ENCODE measurements at regions of chrX and their contacts with region 1.

Region 1: GRCh38 chrX:153460845-153461244 is 9.5 kb downstream of the HAUS7 start:
- DNase-seq: peak; percentile 73
- ATAC-seq: peak; percentile 81
- H3K4me3 Mint-ChIP-seq: no peak overlapping the region
- H3K27ac Mint-ChIP-seq: no peak overlapping the region
- H3K4me1 Mint-ChIP-seq: no peaks in the 10 kb centered on the region
- H3K27me3 Mint-ChIP-seq: no peaks in the 10 kb centered on the region
- CTCF ChIP-seq: 0 out of 2 replicates have a peak, but pooled peaks have one; percentile 21

Region 2: DNA sequence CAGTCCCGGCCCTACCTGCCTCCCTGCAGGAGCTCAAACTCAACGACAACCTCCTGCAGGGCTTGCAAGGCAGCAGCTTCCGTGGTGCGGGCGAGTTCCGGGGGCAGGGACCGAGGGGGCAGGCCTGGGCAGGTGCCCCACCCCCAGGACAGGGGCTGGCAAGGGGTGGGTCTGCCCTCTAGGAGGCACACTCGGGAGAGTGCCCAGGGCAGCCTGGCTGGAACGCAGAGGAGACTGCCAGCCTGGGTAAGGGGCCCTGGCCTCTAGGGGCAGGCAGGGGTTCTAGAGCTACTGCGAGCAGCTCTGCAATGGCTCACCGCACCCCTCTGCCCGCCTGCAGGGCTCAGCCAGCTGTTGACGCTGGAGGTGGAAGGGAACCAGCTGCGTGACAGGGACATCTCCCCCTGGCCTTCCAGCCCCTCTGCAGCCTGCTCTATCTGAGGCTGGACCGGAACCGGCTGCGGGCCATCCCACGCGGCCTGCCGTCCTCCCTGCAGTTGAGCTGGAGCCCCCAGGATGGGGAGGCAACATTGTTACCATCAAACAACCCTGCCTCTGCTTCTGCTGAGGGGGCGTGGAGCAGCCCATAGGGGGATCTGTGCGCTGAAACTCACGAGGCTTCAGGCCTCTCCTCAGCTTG is 21.7 kb after region 1 on chrX:
- CTCF ChIA-PET with region 1: interaction called, 10 read pairs
- POLR2A ChIA-PET with region 1: no interaction called
- DNase-seq: no peak
- ATAC-seq: peak; percentile 31
- H3K4me3 Mint-ChIP-seq: no peak overlapping the region
- H3K27ac Mint-ChIP-seq: no peak overlapping the region
- H3K4me1 Mint-ChIP-seq: peaks cover 7% of the 10 kb centered on the region
- H3K27me3 Mint-ChIP-seq: peaks cover 4% of the 10 kb centered on the region; the same call in 1 of the 2 replicates
- CTCF ChIP-seq: no peak

Measured in WTC11 (cell line).